ENCODE measurements at regions of chr4 and their contacts with region 1.

Region 1: GRCh38 chr4:154928640-154929257 is 147.7 kb downstream of the RBM46 start:
- DNase-seq: peak in 1 of 2 experiments; percentile 17
- H3K4me3 ChIP-seq: no peak overlapping the region
- H3K27ac ChIP-seq: no peak overlapping the region
- H3K4me1 ChIP-seq: no peaks in the 10 kb centered on the region
- H3K27me3 ChIP-seq: no peaks in the 10 kb centered on the region
- CTCF ChIP-seq: peak; percentile 42 to 85 (median 60)
- EP300 ChIP-seq: no peak
- POLR2A ChIP-seq: no peak
- RAD21 ChIP-seq: peak; percentile 90 to 93

Region 2: GRCh38 chr4:154559494-154560418 is 369.0 kb before region 1 on chr4:
- CTCF ChIA-PET with region 1: interaction called, 19 read pairs
- POLR2A ChIA-PET with region 1: no interaction called
- DNase-seq: peak in 1 of 2 experiments; percentile 9
- H3K4me3 ChIP-seq: no peak overlapping the region
- H3K27ac ChIP-seq: no peak overlapping the region
- H3K4me1 ChIP-seq: no peaks in the 10 kb centered on the region
- H3K27me3 ChIP-seq: no peaks in the 10 kb centered on the region
- CTCF ChIP-seq: peak in 2 of 3 experiments; percentile 82 to 85; a peak in 3 of 4 replicates
- EP300 ChIP-seq: no peak
- POLR2A ChIP-seq: no peak
- RAD21 ChIP-seq: peak; percentile 93 to 94

Region 3: DNA sequence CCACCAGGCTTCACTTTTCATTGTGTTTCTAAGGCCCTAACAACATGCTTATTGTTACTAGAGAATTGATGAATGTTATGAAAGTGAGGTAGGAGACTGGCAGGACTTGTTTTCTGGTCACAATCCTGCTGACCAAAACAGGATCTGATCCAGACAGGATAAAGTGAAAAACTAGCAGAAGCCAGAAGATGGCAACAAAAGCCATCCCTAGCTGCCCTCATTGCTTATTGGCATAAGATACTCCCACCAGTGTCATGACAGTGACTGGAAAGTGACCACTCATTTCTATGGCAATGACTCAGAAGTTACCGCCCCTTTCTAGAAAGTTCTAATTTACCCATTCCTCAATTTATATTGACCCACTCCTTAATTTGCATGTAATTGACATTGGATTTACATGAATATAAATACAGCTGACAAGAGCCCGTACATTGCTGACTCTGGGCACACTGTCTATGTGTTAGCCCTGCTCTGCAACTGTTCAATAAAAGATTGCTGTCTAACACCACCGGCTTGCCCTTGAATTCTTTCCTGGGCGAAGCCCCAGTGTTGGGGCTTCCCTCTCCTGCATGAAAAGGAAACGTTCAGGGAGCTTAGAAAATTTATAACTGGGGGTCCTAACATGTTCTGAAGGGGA is 286.3 kb before region 1 on chr4:
- CTCF ChIA-PET with region 1: interaction called, 31 read pairs
- POLR2A ChIA-PET with region 1: no interaction called
- DNase-seq: no peak
- H3K4me3 ChIP-seq: no peak overlapping the region
- H3K27ac ChIP-seq: no peak overlapping the region
- H3K4me1 ChIP-seq: no peaks in the 10 kb centered on the region
- H3K27me3 ChIP-seq: no peaks in the 10 kb centered on the region
- CTCF ChIP-seq: peak in 2 of 3 experiments; percentile 22 to 36; a peak in 2 of 4 replicates
- EP300 ChIP-seq: no peak
- POLR2A ChIP-seq: no peak
- RAD21 ChIP-seq: peak; percentile 61 to 67

Region 4: DNA sequence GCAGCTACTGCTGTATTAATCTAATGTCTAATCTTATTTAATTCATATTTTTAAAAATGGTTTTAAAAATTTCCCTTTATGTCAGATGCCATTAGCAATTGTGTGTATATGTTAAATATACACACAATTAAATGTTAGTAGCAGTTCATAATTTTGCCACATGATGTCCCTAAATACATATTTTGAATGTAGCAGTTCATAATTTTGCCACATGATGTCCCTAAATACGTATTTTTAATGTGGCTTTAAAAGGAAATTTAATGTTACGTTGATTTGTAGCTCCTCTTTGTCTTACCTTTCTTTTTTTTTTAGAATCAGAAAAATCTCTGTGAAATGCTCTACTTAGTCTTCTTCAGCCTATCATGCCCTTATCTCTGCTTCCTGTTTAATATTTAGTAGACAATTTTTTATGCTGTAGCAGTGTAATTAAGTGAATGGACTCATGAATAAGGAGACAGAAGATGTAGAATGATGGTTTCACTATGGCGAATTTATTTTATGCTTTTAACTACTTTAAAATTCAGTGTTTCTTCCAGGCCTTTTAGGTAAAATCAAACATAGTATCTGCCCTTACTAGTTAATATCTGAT is 121.6 kb before region 1 on chr4:
- CTCF ChIA-PET with region 1: interaction called, 34 read pairs
- POLR2A ChIA-PET with region 1: no interaction called
- DNase-seq: no peak
- H3K4me3 ChIP-seq: no peak overlapping the region
- H3K27ac ChIP-seq: no peak overlapping the region
- H3K4me1 ChIP-seq: no peaks in the 10 kb centered on the region
- H3K27me3 ChIP-seq: no peaks in the 10 kb centered on the region
- CTCF ChIP-seq: peak in 2 of 3 experiments; percentile 38 to 80; a peak in 3 of 4 replicates
- EP300 ChIP-seq: no peak
- POLR2A ChIP-seq: no peak
- RAD21 ChIP-seq: peak in 1 of 2 experiments; percentile 58

Region 5: GRCh38 chr4:154869301-154869700 is 59.4 kb before region 1 on chr4:
- CTCF ChIA-PET with region 1: interaction called, 18 read pairs
- POLR2A ChIA-PET with region 1: no interaction called
- DNase-seq: no peak
- H3K4me3 ChIP-seq: no peak overlapping the region
- H3K27ac ChIP-seq: no peak overlapping the region
- H3K4me1 ChIP-seq: peaks cover 0 to 7% (median 4%) of the 10 kb centered on the region in 4 experiments; a peak in 5 of 7 replicates
- H3K27me3 ChIP-seq: no peaks in the 10 kb centered on the region
- CTCF ChIP-seq: no peak
- EP300 ChIP-seq: no peak
- POLR2A ChIP-seq: no peak
- RAD21 ChIP-seq: no peak

Region 6: GRCh38 chr4:155079871-155080270 is 151.1 kb after region 1 on chr4:
- CTCF ChIA-PET with region 1: no interaction called
- POLR2A ChIA-PET with region 1: no interaction called
- DNase-seq: no peak
- H3K4me3 ChIP-seq: no peak overlapping the region
- H3K27ac ChIP-seq: no peak overlapping the region
- H3K4me1 ChIP-seq: no peaks in the 10 kb centered on the region
- H3K27me3 ChIP-seq: no peaks in the 10 kb centered on the region
- CTCF ChIP-seq: no peak
- EP300 ChIP-seq: no peak
- POLR2A ChIP-seq: no peak
- RAD21 ChIP-seq: no peak

Region 7: DNA sequence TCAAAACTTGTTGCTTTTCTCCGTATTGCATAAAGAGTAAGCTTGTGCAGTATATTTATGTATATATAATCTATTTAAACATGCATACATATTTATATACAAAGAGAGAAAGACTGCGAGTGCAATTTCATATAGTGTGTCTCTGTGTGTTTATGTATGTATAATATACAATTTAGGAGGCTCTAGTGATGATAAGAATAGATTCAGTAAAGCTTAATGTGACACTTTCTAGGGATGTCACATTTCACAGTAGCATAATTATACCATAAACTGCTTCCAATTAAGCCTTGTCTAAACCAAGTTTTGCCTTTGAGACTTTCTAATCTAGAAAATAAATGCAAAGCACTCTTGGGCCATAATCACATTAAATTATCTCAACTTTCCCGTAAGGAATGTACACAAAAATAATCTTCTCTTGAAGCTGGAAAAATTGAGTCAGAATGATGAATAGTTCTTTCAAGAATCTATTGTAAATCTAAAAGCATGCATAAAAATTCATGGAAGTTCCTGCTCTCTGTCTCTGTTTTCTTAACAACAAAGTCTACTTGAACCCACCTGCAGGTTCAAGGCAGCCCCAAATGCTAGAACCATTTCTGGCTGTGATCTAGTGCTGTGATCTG is 165.6 kb after region 1 on chr4:
- CTCF ChIA-PET with region 1: no interaction called
- POLR2A ChIA-PET with region 1: no interaction called
- DNase-seq: no peak
- H3K4me3 ChIP-seq: no peak overlapping the region
- H3K27ac ChIP-seq: no peak overlapping the region
- H3K4me1 ChIP-seq: no peaks in the 10 kb centered on the region
- H3K27me3 ChIP-seq: no peaks in the 10 kb centered on the region
- CTCF ChIP-seq: no peak
- EP300 ChIP-seq: no peak
- POLR2A ChIP-seq: no peak
- RAD21 ChIP-seq: no peak

Measured in H1 (cell line).